Activated CD8-positive, alpha-beta memory T cell treated with anti-CD3 and anti-CD28 coated beads, Interleukin-2, amount 10 ng/mL, durations not matched to agents 7 days and 5 days (primary cell): ENCODE measurements at regions of chr1 and their contacts with region 1.

Region 1: DNA sequence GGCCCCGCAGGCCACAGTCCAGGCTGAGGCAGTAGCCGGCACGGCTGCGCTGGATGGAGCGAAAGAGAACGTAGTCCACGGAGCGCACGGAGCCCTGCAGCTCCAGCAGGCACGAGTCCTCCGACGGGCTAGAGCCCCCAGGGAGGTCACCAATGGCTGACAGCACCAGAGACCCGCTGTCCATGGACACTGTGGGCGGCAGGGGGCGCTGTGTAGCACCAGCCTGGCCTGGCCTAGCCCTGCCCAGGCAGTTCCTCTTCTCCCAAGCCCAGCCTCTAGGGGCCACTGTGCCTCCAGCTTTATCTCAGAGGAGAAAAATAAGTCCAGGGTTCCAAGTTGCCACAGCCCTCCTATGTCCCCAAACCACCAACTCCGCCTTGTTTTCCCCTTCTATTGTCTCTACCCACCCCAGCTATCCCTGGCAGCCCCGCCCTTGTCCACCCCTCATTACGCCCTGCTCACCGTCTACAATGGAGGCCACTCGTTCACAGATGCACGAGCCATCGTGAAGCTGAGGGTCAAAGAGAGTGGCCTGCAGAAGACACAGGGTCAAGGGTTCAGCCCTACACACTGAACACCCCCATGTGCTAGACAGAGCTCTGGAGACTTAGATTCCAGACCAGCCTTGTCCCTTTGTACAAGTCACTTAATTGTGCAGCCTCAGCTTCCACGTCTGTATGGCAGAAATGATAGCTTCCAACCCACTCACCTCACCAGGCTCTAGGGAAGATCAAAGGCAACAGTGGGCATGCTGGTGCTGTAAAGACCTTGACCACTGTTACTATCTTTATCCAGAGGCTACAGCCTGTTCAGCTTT is 4.4 kb downstream of the ENTREP3 start:
- DNase-seq: peak; percentile 98
- ATAC-seq: peak; percentile 97
- H3K4me3 Mint-ChIP-seq: peak overlapping the region; percentile 65
- H3K27ac Mint-ChIP-seq: peak overlapping the region; percentile 70
- H3K4me1 Mint-ChIP-seq: peaks cover 35% of the 10 kb centered on the region
- H3K27me3 Mint-ChIP-seq: no peaks in the 10 kb centered on the region

Region 2: DNA sequence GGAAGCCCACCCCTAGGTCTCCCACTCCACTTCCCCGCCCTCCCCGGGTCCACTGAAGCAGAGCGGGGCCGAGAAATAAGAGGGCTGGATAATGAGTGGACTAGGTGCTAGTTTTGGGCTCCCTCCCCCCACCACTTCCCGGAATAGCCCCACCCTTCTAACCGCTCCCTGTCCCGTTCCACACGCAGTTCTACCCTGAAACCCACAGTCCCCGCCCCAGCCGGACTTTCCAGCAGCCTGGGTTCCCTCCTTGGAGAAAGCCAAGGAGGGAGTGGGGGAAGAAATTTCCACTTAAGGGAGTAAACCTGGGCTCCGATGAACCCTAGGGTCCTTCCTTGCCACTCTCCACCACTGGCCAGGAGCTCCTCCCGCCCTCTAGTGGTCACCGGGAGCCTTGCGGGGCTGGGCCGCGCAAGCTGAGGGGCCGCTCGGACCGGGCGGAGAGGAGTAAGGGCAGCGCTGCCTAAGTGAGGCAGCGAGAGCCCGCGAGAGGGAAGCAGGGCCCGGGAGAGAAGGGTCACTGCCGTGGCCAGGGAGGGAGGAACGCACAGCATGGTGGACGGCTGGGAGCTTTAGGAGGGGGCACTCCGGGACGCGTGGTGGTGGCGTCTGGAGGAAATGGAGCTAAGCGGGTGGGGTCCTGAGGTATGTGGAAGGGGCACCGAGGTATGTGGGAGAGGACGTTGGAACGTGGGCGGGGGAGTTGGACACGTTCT is 57.4 kb before region 1 on chr1:
- CTCF ChIA-PET with region 1: interaction called, 11 read pairs
- DNase-seq: peak; percentile 86
- ATAC-seq: peak; percentile 66
- H3K4me3 Mint-ChIP-seq: peak overlapping the region; percentile 73
- H3K27ac Mint-ChIP-seq: peak overlapping the region; percentile 92
- H3K4me1 Mint-ChIP-seq: peaks cover 29% of the 10 kb centered on the region
- H3K27me3 Mint-ChIP-seq: no peaks in the 10 kb centered on the region

Region 3: DNA sequence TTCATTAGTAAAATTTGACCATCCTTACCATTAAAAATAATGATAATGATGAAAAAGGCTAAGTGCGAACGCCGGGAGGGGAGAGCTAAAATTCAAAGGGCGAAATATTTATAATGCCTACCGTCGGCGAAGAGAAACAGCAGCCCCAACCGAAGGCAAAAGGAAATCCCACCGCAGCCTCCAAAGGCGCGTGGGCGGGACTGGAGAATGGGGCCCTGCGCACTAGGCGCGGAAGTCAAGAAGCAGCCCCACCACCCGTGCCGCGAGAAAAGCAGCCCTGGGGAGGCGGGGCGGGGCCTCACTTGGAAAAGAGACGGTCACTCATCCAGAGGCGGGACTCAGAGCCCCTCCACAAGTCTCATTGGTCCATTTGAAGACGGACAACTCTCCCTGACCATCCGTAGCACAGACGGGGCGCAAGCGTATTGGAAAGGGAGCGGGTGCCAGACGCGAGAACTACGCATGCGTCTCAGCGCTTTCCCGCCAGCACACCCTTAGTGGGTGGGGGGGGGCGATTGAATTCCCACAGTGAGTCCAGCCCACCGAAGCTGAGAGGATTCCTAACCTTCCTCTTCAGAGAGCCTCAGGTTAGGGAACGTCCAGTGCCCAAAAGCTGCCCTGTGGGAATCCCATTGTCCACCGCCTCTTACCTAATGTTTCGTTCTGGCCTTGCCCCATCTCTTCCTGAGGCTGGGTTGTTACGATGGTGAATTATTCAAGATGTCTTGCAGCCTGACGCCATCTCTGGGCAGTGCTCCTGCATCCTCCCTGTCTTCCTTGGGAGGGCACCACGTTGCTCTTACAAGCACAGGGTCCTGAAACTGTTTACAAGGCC is 23.4 kb before region 1 on chr1:
- CTCF ChIA-PET with region 1: interaction called, 25 read pairs
- DNase-seq: peak; percentile 100
- ATAC-seq: peak; percentile 97
- H3K4me3 Mint-ChIP-seq: peak overlapping the region; percentile 98
- H3K27ac Mint-ChIP-seq: peak overlapping the region; percentile 98
- H3K4me1 Mint-ChIP-seq: peaks cover 41% of the 10 kb centered on the region
- H3K27me3 Mint-ChIP-seq: no peaks in the 10 kb centered on the region

Region 4: GRCh38 chr1:155277070-155277895 is 26.4 kb after region 1 on chr1 and contains the start of gene HCN3:
- CTCF ChIA-PET with region 1: interaction called, 68 read pairs
- DNase-seq: peak; percentile 96
- ATAC-seq: peak; percentile 70
- H3K4me3 Mint-ChIP-seq: peak within 1 kb of the TSS; percentile 68
- H3K27ac Mint-ChIP-seq: peak within 1 kb of the TSS; percentile 49
- H3K4me1 Mint-ChIP-seq: peaks cover 36% of the 10 kb centered on the region
- H3K27me3 Mint-ChIP-seq: no peaks in the 10 kb centered on the region
- total RNA-seq, gene HCN3: 5.4 to 6.1 TPM

Region 5: DNA sequence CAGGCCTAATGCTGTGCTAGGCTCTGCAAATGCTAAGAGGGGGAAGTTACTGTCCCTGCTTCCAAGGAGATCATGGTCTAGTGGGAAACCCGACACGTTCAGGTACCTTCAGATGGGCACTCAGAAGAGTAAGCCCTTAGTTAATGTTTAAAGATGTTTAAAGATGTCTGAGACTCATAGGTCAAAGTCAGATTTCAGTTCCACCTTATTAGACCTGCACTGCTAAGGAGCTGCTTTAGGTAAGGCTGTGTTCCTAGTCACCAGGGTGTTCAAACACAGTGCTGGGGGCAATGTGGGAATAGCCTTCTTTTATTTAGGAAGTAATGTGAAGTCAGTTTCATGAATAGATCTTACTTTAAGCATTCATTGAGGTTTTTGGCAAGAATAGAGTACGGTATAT is 66.1 kb after region 1 on chr1:
- CTCF ChIA-PET with region 1: interaction called, 160 read pairs
- DNase-seq: no peak
- ATAC-seq: no peak
- H3K4me3 Mint-ChIP-seq: no peak overlapping the region
- H3K27ac Mint-ChIP-seq: no peak overlapping the region
- H3K4me1 Mint-ChIP-seq: peaks cover 46% of the 10 kb centered on the region
- H3K27me3 Mint-ChIP-seq: no peaks in the 10 kb centered on the region

Region 6: DNA sequence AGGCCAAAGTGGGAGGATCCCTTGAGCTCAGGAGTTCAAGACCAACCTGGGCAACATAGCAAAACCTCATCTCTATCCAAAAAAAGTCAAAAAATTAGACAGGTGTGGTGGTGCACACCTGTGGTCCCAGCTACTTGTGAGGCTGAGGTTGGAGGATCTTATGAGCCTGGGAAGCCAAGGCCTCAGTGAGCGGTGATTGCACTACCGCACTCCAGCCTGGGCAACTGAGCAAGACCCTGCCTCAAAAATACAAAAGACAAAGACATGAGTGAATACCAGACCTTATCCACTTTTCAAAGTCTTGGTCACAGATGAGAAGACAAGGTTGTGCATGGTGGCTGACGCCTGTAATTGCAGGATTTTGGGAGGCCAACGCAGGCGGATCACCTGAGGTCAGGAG is 346.0 kb after region 1 on chr1:
- CTCF ChIA-PET with region 1: interaction called, 23 read pairs
- DNase-seq: no peak
- ATAC-seq: no peak
- H3K4me3 Mint-ChIP-seq: no peak overlapping the region
- H3K27ac Mint-ChIP-seq: no peak overlapping the region
- H3K4me1 Mint-ChIP-seq: peaks cover 11% of the 10 kb centered on the region
- H3K27me3 Mint-ChIP-seq: no peaks in the 10 kb centered on the region